ENCODE measurements at regions of chr14 and their contacts with region 1.

Region 1: DNA sequence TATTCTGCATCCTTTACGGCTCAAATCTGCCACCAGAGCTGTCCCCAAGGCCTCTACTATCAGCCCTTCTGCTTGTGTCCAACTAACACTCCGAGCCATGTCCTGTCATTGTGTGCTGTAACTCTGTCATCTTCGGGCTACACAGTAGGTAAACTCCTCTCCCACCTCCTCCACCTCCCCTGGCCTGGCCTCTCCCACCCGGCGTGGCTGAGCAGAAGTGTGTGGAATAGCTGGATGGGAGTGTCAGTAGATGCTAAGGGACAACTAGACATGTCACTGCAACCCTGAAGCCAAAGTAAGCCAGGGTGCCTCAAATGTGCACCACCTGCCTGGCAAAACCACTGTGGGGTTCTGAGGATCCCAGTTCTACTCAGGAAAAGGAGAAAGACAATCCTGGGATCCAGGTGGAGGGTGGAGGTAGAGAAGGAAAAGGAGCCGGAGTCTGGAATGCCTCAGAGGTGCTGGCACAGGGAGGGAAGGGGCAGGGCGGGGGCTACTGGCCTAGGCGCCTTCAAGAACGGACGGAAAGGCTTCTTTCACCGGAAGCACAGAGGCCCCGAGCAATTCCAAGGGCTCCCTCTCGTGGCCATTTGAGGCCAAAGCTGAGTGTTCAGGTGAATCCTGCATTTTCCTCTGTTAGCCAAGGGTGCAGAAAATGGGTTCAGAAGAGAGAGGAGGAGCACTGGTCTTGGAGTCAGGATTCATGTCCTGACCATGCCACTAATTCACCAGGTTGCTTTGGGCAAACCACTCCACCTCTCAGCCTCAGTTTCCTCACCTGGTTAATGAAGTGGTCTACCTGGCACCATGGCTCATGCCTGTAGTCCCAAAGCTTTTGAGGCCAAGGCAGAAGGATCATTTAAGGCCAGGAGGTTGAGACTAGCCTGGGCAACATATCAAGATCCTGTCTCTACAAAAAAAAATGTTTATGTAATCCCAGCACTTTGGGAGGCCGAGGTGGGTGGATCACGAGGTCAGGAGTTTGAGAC is 20.5 kb upstream of the FAM181A start:
- DNase-seq: peak in 1 of 2 donors; percentile 65
- ATAC-seq: peak; percentile 67

Region 2: GRCh38 chr14:93648440-93649168 is 258.0 kb before region 1 on chr14:
- intact Hi-C with region 1: loop called in 1 of 2 experiments (anchors 5 kb)
- DNase-seq: no peak
- ATAC-seq: no peak